Motor neuron (in vitro differentiated cells): ENCODE measurements at regions of chr5 and their contacts with region 1.

Region 1: GRCh38 chr5:93582677-93583438 is at the start of gene NR2F1:
- ATAC-seq: peak in 7 of 8 experiments; percentile 1 to 75 (median 66)
- H3K4me3 ChIP-seq: peak within 1 kb of the TSS; percentile 80 to 94 (median 88)
- H3K27ac ChIP-seq: peak within 1 kb of the TSS; percentile 93 to 95
- H3K4me1 ChIP-seq: peaks cover 7 to 12% of the 10 kb centered on the region in 2 donors
- total RNA-seq, gene NR2F1: 1.0 to 182 (median 108) TPM

Region 2: DNA sequence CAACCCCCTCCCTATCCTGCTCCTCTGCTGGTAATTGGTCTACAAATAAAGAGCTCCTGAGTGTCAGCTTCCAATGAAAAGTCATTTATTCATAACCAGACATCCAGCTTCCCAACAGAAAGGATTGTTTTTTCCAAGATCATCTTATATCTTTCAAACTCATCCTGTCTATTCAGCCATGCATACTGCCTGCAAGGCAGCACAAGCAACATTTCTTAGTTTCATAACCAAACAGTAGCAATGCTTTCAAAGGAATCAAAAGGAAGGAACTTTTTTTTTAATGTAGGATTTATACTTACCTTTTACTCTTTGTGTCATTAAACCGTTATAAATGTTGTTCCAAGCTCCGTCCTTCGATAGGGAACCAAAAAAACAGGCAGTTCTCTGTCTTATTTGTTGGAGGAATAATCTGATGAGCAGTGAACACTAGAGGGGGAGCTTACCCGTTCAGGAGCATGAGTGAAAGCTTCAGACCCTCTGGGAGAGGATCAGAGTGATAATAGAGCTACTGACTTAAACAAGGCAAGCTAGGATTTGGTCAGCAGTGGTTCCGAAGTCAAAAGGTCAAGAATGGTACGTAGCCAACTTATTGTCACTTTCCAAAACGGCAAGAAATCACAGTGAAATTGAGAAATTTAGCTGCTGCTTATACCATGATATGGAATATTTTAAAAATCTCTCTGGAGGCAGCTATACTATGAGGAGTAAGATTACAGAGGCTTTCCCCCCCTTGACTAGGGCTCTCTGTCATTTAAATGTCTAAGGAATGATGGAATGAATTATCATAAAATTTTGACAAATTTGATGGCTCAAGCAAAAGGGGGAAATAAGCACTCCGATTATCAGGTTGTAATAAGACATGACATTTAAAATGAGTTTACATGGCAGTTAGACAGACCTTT is 894.8 kb before region 1 on chr5:
- in situ Hi-C with region 1: loop called in 2 of 9 experiments (anchors 25 kb)
- ATAC-seq: peak; percentile 76 to 100 (median 100)
- H3K4me3 ChIP-seq: peak overlapping the region in 4 of 5 donors; percentile 15 to 19 (median 16)
- H3K27ac ChIP-seq: peak overlapping the region in 1 of 2 donors; percentile 20
- H3K4me1 ChIP-seq: peaks cover 12 to 33% of the 10 kb centered on the region in 2 donors

Region 3: DNA sequence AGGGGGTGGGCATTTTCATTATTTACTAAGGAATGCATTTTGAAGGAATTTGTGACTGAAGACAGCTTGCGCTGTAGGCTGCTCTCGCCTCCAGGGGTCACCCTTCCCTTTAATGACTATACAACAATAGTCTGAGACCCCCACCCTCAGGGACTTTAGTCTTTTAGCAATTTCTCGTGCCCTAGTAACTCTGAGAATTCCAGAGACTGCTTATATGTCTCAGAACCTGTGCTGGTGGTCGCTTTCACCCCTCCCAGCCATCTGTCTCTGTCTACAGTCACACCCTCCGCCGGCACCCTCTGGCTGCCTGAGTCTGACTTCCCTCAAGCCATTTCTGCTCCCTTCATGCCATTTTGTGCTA is 673.3 kb before region 1 on chr5:
- in situ Hi-C with region 1: loop called in 1 of 9 experiments (anchors 10 kb)
- ATAC-seq: peak in 6 of 8 experiments; percentile 67 to 92 (median 90)
- H3K4me3 ChIP-seq: peak overlapping the region in 1 of 5 donors; percentile 13
- H3K27ac ChIP-seq: peak overlapping the region; percentile 0 to 30
- H3K4me1 ChIP-seq: peaks cover 42 to 50% of the 10 kb centered on the region in 2 donors

Region 4: DNA sequence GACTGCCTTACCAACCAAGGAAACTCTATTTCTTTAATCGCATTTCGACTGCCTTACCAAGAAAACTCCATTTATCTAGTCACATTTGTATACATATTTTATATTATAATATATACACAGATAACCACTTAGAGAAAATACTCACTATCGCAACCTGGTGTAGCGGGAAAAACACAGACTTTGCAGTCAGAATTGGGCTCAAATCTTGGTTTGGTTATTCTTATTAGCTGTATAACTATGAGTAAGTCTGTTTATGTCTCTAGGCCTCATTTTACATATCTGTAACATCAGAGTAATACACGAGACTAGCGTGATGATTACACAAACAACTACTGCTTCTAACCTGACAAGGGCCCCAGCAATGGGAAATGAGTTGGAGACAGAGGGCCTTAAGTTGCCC is 286.0 kb after region 1 on chr5:
- in situ Hi-C with region 1: no loop called
- ATAC-seq: no peak
- H3K4me3 ChIP-seq: no peak overlapping the region
- H3K27ac ChIP-seq: no peak overlapping the region
- H3K4me1 ChIP-seq: peaks cover 0 to 3% of the 10 kb centered on the region in 2 donors

Region 5: GRCh38 chr5:93899026-93899600 is 316.3 kb after region 1 on chr5:
- in situ Hi-C with region 1: loop called in 3 of 9 experiments (anchors 25 kb)
- ATAC-seq: no peak
- H3K4me3 ChIP-seq: no peak overlapping the region
- H3K27ac ChIP-seq: no peak overlapping the region
- H3K4me1 ChIP-seq: peaks cover 13 to 14% of the 10 kb centered on the region in 2 donors

Region 6: GRCh38 chr5:94849821-94850736 is 1267.2 kb after region 1 on chr5:
- in situ Hi-C with region 1: loop called in 3 of 9 experiments (anchors 25 kb)
- ATAC-seq: peak; percentile 82 to 98 (median 89)
- H3K4me3 ChIP-seq: no peak overlapping the region
- H3K27ac ChIP-seq: no peak overlapping the region
- H3K4me1 ChIP-seq: peaks cover 10 to 20% of the 10 kb centered on the region in 2 donors